Naive thymus-derived CD4-positive, alpha-beta T cell (primary cell): ENCODE measurements at regions of chr6 and their contacts with region 1.

Region 1: DNA sequence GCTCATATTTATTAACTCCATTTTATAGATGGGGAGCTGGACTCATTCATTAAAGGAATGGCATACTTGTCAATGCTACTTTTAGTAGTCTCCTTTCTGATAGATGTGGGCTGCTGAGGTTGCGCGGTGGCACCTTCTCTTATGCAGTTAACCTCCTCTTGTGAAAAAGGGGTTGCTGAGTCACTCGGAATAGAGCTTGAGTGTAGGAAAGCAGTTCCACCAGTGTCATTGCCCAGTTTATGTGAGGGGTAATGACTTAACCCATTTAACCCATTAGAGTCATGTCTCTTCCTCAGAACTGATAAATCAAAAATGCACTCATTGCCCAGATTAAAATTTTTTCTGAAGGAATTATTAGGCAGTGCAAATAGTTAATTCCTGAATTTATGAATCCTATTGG is 6.3 kb downstream of the MAPK14 start:
- DNase-seq: peak in 2 of 9 donors; percentile 10 to 20
- ATAC-seq: peak; percentile 67
- H3K4me3 ChIP-seq: no peak overlapping the region
- H3K4me3 Mint-ChIP-seq: peak overlapping the region in 9 of 10 donors; percentile 50 to 73 (median 60)
- H3K27ac ChIP-seq: no peak overlapping the region
- H3K27ac Mint-ChIP-seq: peak overlapping the region in 5 of 9 donors; percentile 4 to 31 (median 15)
- H3K4me1 ChIP-seq: peaks cover 48 to 51% of the 10 kb centered on the region in 2 donors
- H3K4me1 Mint-ChIP-seq: peaks cover 59 to 89% (median 82%) of the 10 kb centered on the region in 7 donors
- H3K27me3 ChIP-seq: no peaks in the 10 kb centered on the region
- H3K27me3 Mint-ChIP-seq: no peaks in the 10 kb centered on the region

Region 2: DNA sequence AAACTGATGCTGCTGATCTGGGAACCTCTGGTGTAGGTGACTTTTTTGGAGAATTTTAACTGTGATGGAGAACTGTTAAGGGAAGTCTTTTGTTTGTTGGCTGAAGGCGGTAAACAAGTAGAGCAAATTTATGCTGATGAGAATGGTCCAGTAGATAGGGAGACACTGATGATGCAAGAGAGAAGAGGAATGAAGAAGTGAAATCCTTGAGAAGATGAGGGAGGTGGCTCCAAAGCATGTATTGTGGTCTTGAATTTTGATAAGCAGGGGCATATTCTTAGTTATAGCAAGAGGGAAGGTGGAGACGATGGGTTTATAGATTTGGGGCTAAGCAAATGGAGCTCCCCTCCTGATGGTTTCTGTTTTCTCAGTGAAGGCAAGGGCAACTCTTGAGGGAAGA is 15.6 kb after region 1 on chr6:
- CTCF ChIA-PET with region 1: interaction called, 5 read pairs
- POLR2A ChIA-PET with region 1: interaction called, 4 read pairs
- intact Hi-C with region 1: loop called in 1 of 2 experiments (anchors 2 kb)
- DNase-seq: no peak
- ATAC-seq: no peak
- H3K4me3 ChIP-seq: no peak overlapping the region
- H3K4me3 Mint-ChIP-seq: no peak overlapping the region
- H3K27ac ChIP-seq: no peak overlapping the region
- H3K27ac Mint-ChIP-seq: no peak overlapping the region
- H3K4me1 ChIP-seq: peaks cover 22 to 25% of the 10 kb centered on the region in 2 donors
- H3K4me1 Mint-ChIP-seq: peaks cover 6 to 30% (median 17%) of the 10 kb centered on the region in 7 donors
- H3K27me3 ChIP-seq: no peaks in the 10 kb centered on the region
- H3K27me3 Mint-ChIP-seq: no peaks in the 10 kb centered on the region